ENCODE measurements at regions of chr1 and their contacts with region 1.

Region 1: GRCh38 chr1:26321315-26322041 is 3.7 kb downstream of the CD52 start:
- DNase-seq: peak; percentile 97
- H3K4me3 Mint-ChIP-seq: peak overlapping the region; percentile 77
- H3K27ac Mint-ChIP-seq: peak overlapping the region; percentile 91
- H3K4me1 Mint-ChIP-seq: peaks cover 34% of the 10 kb centered on the region
- H3K27me3 Mint-ChIP-seq: no peaks in the 10 kb centered on the region

Region 2: DNA sequence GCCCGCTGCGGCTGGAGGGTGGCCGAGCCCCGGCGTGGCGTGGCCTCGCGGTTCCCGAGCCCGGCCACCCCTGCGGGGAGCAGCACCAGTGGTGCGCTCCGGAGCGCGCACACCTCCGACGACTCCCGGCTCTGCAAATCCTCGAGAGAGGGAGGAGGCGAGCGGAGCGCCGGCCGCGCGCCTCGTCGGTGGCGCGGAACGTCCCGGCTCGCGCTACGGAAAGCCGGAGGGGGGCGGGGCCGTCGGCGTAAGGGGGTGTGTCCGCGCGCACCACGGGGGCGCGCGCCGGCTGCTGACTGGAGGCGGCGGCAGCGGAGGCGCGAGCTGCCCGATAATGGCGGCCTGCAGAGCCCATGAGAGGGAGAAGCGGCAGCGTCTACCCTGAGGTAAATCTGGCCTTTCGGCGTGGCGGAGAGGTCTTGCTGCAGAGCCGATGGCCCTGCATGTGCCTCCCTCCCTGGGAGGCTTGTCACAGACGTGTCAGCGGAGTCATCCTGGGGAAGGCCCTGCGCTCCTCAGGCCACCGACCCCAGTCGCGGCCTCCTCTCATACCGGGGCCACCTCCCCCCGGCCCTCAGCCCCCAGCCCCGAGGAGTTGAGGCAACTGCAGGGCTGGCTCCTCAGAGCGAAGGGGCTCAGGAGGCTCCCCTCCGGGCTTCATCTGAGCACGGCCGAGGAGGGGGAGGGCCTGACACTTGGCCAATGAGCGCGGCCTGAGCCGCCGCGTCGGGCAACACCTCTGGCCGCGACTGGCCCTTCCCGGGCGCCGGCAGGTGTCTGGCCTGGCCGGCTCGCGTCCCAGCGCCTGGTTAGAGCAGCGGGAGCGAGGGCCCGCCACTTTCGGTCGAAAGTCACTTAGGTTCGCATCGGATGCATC is 209.7 kb before region 1 on chr1 and contains the start of gene PDIK1L:
- CTCF ChIA-PET with region 1: interaction called, 3 read pairs
- POLR2A ChIA-PET with region 1: no interaction called
- intact Hi-C with region 1: loop called (anchors 5 kb)
- DNase-seq: peak; percentile 96
- H3K4me3 Mint-ChIP-seq: peak within 1 kb of the TSS; percentile 97
- H3K27ac Mint-ChIP-seq: peak within 1 kb of the TSS; percentile 93
- H3K4me1 Mint-ChIP-seq: peaks cover 28% of the 10 kb centered on the region
- H3K27me3 Mint-ChIP-seq: no peaks in the 10 kb centered on the region
- total RNA-seq, gene PDIK1L: 14.9 to 15.2 TPM

Region 3: DNA sequence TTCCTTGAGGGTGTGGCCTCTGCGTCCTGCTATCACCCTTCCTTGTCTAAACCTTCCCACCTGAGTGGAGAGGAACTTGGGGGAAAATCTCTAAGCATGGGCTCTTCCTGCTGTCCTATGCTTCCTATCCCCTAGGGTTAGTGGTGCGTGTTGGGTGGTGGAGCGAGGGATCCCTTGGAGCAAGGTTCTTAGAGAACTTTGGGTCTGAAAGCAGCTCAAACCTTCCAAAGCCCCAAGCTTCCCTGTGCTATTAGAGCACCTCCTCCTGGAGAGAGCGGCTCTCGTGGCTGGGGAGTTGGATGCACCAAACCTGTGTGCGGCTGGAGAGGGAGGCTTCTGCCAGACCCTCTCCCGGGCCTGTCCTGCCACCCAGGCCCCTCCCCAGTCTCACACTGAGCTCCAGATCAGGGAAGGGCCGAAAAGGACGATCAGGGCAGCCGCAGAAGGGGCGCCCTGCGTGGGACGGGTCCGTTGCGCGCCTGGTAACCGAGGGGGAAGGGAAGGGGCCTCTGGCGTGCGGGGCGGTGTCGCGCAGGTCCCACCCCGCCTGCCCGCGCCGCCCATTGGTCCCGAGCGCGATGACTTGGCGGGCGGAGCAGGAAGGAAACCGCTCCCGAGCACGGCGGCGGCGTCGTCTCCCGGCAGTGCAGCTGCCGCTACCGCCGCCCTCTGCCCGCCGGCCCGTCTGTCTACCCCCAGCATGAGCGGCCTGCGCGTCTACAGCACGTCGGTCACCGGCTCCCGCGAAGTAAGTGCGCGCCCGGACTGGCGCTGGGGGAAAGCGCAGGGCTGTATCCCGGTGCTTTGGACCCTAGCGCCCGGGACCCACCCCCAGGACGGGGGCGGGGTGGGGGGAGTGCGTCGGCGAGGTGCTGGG is 41.8 kb before region 1 on chr1 and contains the start of gene SH3BGRL3:
- CTCF ChIA-PET with region 1: interaction called, 886 read pairs
- POLR2A ChIA-PET with region 1: interaction called, 100 read pairs
- intact Hi-C with region 1: loop called (anchors 1 kb)
- DNase-seq: peak; percentile 89
- H3K4me3 Mint-ChIP-seq: peak within 1 kb of the TSS; percentile 89
- H3K27ac Mint-ChIP-seq: peak within 1 kb of the TSS; percentile 94
- H3K4me1 Mint-ChIP-seq: peaks cover 87% of the 10 kb centered on the region
- H3K27me3 Mint-ChIP-seq: no peaks in the 10 kb centered on the region
- total RNA-seq, gene SH3BGRL3: 305 to 320 TPM

Region 4: GRCh38 chr1:26306290-26307229 is 14.9 kb before region 1 on chr1 and contains the start of gene UBXN11:
- CTCF ChIA-PET with region 1: interaction called, 77 read pairs
- POLR2A ChIA-PET with region 1: interaction called, 44 read pairs
- intact Hi-C with region 1: loop called (anchors 1 kb)
- DNase-seq: peak; percentile 97
- H3K4me3 Mint-ChIP-seq: peak within 1 kb of the TSS; percentile 95
- H3K27ac Mint-ChIP-seq: peak within 1 kb of the TSS; percentile 92
- H3K4me1 Mint-ChIP-seq: peaks cover 32% of the 10 kb centered on the region
- H3K27me3 Mint-ChIP-seq: no peaks in the 10 kb centered on the region
- total RNA-seq, gene UBXN11: 24.5 to 26.1 TPM

Region 5: DNA sequence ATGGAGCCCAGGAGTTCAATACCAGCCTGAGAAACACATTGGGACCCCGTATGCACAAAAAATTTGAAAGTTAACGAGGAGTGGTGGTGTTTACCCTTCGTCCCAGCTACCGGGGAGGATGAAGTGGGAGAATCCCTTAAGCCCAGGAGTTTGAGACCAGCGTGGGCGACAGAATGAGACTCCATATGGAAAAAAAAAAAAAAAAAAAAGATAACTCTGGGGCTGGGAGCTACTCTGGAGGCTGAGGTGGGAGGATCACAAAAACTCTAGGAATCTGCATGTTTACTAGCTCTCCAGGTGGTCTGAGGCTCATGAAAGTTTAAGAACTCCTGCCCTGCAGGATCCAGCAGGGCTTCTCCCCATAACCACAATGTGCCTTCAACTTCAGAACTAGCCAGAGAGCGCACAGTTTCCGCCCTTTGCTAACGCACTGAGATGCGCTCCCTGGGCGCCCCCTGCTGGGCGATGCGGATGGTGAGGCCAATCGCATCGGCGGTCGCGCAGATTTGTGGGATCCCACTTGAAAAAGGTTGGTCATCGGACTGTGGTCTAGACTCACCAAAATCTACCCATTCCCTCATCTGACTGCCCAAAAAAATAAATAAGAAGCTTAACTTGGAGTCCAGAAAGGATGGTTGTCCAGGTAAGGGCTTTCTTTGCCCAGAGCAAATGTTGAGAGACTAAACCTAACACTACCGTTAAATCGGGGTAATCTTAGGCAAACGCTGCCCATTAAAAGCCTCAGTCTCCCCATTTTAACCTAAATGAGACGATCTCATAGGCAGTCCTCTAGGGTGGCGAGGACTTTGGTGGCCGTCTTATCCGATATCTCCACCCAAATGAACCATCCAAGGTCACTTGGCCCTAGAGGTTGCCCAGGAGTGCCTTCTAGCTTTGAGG is 42.3 kb after region 1 on chr1:
- CTCF ChIA-PET with region 1: interaction called, 14 read pairs
- POLR2A ChIA-PET with region 1: no interaction called
- intact Hi-C with region 1: loop called (anchors 2 kb)
- DNase-seq: peak; percentile 91
- H3K4me3 Mint-ChIP-seq: peak overlapping the region; percentile 8
- H3K27ac Mint-ChIP-seq: peak overlapping the region; percentile 58
- H3K4me1 Mint-ChIP-seq: peaks cover 41% of the 10 kb centered on the region
- H3K27me3 Mint-ChIP-seq: peaks cover 7% of the 10 kb centered on the region

Region 6: DNA sequence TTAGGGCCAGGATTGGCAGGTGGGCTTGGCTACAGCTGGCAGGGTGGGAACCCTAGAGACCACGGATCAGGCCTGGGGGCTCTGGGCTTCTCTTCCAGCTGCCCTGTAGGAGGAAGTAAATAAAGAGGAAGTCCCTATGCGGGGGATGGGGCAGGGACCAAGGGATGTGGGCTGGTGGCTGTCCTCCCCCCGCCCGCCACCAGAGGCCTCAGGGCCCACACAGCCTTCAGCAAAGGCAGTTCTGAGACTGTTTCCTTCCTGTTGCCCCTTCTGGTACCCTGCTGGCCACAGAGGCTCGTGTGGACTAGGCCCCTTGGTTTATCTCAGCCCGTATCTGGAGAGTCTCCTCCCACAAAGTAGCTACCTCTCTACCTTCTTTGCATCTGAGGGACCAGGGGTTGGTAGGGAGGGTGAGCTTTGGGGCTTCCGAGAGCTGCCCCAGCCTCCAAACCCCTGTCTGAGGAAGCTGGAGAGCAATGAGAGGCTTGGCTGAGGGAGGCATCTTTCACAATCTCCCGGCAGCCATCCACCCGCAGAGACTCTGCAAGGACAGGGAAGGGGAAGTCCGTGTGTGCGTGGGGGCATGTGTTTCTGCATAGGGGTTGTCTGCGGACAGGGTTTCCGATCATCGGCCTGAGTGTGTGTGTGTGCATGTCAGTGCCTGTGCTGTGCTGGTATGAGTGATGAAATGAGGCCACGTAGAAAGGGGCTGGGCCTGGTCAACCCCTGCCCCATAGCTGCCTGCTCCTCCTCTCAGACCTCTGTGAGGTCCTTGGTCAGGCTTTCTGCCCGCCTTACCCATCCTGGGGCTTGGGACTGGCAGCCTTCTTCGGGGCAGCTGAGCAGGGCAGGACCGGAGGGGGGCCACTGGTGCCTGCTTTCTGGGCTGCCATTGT is 220.6 kb after region 1 on chr1:
- CTCF ChIA-PET with region 1: no interaction called
- POLR2A ChIA-PET with region 1: no interaction called
- intact Hi-C with region 1: loop called (anchors 10 kb)
- DNase-seq: peak; percentile 94
- H3K4me3 Mint-ChIP-seq: peak overlapping the region; percentile 69
- H3K27ac Mint-ChIP-seq: peak overlapping the region; percentile 98
- H3K4me1 Mint-ChIP-seq: peaks cover 88% of the 10 kb centered on the region
- H3K27me3 Mint-ChIP-seq: no peaks in the 10 kb centered on the region

Region 7: GRCh38 chr1:26582836-26583460 is 261.5 kb after region 1 on chr1:
- CTCF ChIA-PET with region 1: no interaction called
- POLR2A ChIA-PET with region 1: no interaction called
- intact Hi-C with region 1: no loop called
- DNase-seq: peak; percentile 94
- H3K4me3 Mint-ChIP-seq: no peak overlapping the region
- H3K27ac Mint-ChIP-seq: peak overlapping the region; percentile 73
- H3K4me1 Mint-ChIP-seq: peaks cover 47% of the 10 kb centered on the region
- H3K27me3 Mint-ChIP-seq: no peaks in the 10 kb centered on the region

Measured in activated CD4-positive, alpha-beta memory T cell treated with anti-CD3 and anti-CD28 coated beads for 36 hours (primary cell).